ENCODE measurements at regions of chr19 and their contacts with region 1.

Region 1: DNA sequence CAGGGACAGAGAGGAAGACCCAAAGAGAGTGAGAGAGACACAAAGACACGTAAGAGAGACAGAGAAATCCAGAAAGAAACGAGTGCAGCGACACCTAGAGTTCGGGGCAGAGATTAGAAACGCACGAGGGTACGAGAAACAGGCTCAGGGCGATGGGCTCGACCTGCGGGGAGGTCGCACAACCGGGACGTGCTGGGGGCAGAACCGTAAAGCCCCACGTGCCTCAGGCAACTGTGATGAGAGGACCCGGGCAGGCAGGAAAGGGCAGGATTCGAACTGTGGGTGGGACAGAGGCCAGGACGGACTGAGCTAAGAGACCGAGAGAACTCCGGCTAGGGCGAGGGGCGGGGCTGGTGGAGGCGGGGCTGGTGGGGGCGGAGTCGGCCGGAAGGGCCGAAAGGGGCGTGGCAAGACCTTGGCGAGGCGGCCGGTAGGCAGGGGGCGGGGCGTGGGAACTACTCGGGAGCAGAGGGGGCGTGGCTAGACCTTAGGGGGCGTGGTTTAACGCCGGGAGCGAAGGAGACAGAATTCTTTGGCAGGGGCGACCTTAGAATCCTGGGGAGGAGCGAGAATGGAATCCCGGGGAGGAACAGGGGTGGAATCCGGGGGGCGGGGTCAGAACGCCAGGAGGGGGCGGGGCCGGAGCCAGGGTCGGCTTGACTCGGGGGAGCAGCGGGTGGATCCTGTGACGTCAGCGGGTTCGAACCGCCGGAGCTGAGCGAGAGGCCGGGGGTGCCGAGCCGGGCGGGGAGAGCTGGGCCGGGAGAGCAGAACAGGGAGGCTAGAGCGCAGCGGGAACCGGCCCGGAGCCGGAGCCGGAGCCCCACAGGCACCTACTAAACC is at the start of gene NECTIN2:
- DNase-seq: peak; percentile 97
- ATAC-seq: peak; percentile 76 to 77
- H3K4me3 ChIP-seq: peak within 1 kb of the TSS; percentile 76 to 96 (median 90)
- H3K27ac ChIP-seq: peak within 1 kb of the TSS; percentile 82 to 93 (median 90)
- H3K4me1 ChIP-seq: peaks cover 12 to 23% of the 10 kb centered on the region in 2 donors
- H3K27me3 ChIP-seq: no peaks in the 10 kb centered on the region
- CTCF ChIP-seq: peak; percentile 43 to 67 (median 59)
- POLR2A ChIP-seq: peak; percentile 78 to 87
- total RNA-seq, gene NECTIN2: 10.3 to 20.8 (median 16.7) TPM

Region 2: DNA sequence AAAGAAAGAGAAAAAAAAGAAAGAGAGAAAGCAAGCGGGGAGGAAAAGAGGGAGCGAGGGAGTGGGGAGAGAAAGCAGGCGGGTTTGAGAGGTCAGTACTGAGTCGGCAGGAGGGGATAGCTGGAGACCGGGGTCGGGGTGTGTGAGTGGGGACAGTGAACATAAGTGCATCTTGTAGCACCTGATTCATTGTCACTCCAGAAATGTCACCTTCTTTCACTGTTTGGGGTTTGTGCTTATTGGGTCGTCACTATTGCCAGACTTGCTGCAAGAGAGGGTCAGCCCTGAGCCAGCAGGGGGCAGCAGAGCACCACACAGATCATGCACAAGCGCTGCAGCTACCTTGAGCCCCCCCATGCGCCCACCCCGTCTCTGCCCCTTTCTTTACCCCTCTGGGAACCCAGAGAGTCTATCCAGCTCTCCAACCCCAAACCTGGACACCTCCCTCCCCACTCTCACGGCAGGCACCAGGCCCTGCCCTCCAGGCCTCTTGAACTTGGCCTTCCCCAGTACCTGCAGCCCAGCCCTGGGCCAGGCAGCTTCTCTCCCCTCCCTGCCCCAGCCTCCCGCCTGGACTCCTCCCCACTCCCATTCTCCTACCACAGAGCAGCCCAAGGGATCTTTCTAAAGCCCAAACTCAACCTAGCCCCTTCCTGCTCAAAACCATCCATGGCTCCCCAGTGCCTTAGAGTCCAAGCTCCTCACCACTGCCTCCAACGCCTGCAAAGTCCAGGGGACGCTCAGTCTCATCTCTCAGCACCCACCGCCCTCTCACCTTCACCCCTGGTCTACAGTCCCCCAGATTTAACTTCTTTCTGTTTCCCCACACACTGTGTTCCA is 156.6 kb before region 1 on chr19:
- in situ Hi-C with region 1: no loop called
- intact Hi-C with region 1: loop called (anchors 1 kb)
- DNase-seq: peak in 1 of 2 donors; percentile 50
- ATAC-seq: peak in 1 of 2 donors; percentile 59
- H3K4me3 ChIP-seq: no peak overlapping the region
- H3K27ac ChIP-seq: no peak overlapping the region
- H3K4me1 ChIP-seq: peaks cover 0 to 5% of the 10 kb centered on the region in 2 donors
- H3K27me3 ChIP-seq: no peaks in the 10 kb centered on the region
- CTCF ChIP-seq: peak; percentile 78 to 92 (median 87)
- POLR2A ChIP-seq: no peak

Region 3: GRCh38 chr19:44712864-44713515 is 132.8 kb before region 1 on chr19:
- in situ Hi-C with region 1: no loop called
- intact Hi-C with region 1: no loop called
- DNase-seq: no peak
- ATAC-seq: no peak
- H3K4me3 ChIP-seq: no peak overlapping the region
- H3K27ac ChIP-seq: no peak overlapping the region
- H3K4me1 ChIP-seq: no peaks in the 10 kb centered on the region
- H3K27me3 ChIP-seq: no peaks in the 10 kb centered on the region
- CTCF ChIP-seq: no peak
- POLR2A ChIP-seq: no peak

Region 4: GRCh38 chr19:44782729-44783128 is 63.1 kb before region 1 on chr19:
- in situ Hi-C with region 1: no loop called
- intact Hi-C with region 1: loop called (anchors 1 kb)
- DNase-seq: no peak
- ATAC-seq: no peak
- H3K4me3 ChIP-seq: no peak overlapping the region
- H3K27ac ChIP-seq: no peak overlapping the region
- H3K4me1 ChIP-seq: peaks cover 4 to 6% of the 10 kb centered on the region in 2 donors
- H3K27me3 ChIP-seq: no peaks in the 10 kb centered on the region
- CTCF ChIP-seq: no peak
- POLR2A ChIP-seq: no peak

Region 5: DNA sequence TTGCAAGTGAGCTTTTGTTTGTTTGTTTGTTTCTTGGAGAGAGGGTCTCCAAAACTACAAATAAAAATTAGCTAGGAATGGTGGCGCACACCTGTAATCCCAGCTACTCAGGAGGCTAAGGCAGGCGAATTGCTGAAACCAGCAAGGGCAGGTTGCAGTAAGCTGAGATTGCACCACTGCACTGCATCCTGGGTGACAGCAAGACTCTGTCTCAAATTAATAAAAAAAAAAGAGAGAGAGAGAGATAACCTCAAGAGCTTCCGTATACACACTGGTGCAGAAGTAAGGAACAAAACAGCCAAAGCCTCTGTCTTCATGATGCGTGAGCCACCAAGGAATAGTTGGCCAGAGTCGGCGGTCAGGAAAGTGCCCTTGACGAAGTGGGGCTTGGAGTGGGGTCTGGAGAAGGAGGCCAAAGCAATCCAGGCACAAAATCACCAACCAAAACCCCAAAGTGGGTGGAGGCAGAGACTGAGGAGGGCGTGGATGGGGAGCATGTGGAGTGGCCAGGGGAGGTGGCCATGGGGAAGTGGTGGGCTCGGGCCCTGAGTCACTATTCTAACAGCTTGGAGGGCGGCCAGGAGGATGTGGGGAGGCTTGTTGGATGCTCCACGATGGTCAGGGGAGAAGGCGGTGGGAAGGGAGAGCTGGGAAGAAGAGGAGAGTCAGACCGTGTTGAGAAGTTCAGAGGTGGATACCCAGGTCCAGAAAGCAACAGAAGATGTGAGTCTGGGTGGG is 24.1 kb after region 1 on chr19:
- in situ Hi-C with region 1: no loop called
- intact Hi-C with region 1: no loop called
- DNase-seq: peak in 1 of 2 donors; percentile 33
- ATAC-seq: no peak
- H3K4me3 ChIP-seq: no peak overlapping the region
- H3K27ac ChIP-seq: peak overlapping the region; percentile 25 to 76 (median 60)
- H3K4me1 ChIP-seq: peaks cover 6 to 9% of the 10 kb centered on the region in 2 donors
- H3K27me3 ChIP-seq: no peaks in the 10 kb centered on the region
- CTCF ChIP-seq: no peak
- POLR2A ChIP-seq: no peak

Region 6: DNA sequence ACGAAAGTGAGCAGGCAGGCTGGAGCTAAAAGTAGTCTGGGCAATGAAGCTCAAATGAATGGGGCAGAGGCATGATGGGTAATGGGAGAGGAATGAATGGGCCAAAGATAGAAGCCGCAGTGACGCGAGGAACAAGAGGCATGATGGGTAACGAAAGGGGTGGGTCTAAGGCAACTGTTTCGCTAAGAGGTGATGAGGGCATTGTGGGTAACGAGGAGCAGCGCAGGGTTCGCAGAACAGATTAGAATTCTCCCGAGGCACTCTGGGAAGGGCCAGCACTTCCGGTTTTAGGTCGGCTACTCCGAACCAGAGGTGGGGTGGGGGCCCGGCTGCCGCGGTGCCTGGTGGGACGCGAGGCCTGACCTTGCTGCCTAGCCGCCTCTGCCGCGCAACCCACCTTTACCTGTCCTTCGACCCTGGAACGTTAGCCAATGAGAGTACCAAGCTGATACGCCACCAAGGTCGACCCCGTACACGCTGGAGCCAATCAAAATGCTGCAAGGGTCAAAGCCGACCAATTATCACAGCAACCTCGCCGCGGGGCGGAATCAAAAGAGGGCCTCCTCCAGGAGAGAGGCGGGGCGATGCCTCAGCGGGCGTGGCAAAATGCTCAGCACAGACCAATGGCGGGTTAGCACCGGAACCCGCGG is 44.7 kb after region 1 on chr19:
- in situ Hi-C with region 1: no loop called
- intact Hi-C with region 1: loop called (anchors 1 kb)
- DNase-seq: peak; percentile 100
- ATAC-seq: peak; percentile 92 to 95
- H3K4me3 ChIP-seq: peak overlapping the region; percentile 67 to 81 (median 74)
- H3K27ac ChIP-seq: peak overlapping the region; percentile 92 to 95 (median 94)
- H3K4me1 ChIP-seq: peaks cover 18 to 23% of the 10 kb centered on the region in 2 donors
- H3K27me3 ChIP-seq: no peaks in the 10 kb centered on the region
- CTCF ChIP-seq: no peak
- POLR2A ChIP-seq: peak; percentile 31 to 43

Region 7: GRCh38 chr19:45001087-45001739 is 155.4 kb after region 1 on chr19 and contains the start of gene RELB:
- in situ Hi-C with region 1: no loop called
- intact Hi-C with region 1: loop called (anchors 5 kb)
- DNase-seq: peak; percentile 88 to 92
- ATAC-seq: peak; percentile 80 to 84
- H3K4me3 ChIP-seq: peak within 1 kb of the TSS; percentile 74 to 95 (median 92)
- H3K27ac ChIP-seq: peak within 1 kb of the TSS; percentile 98 to 100 (median 100)
- H3K4me1 ChIP-seq: peaks cover 0 to 8% of the 10 kb centered on the region in 2 donors
- H3K27me3 ChIP-seq: no peaks in the 10 kb centered on the region
- CTCF ChIP-seq: peak in 1 of 5 experiments; percentile 18
- POLR2A ChIP-seq: no peak
- total RNA-seq, gene RELB: 8.4 to 21.5 (median 12.9) TPM